Calu3 (cell line): ENCODE measurements at regions of chr6 and their contacts with region 1.

Region 1: GRCh38 chr6:100116411-100117194 is 122.6 kb upstream of the MCHR2 start:
- DNase-seq: peak; percentile 55
- H3K4me3 Mint-ChIP-seq: no peak overlapping the region
- H3K27ac Mint-ChIP-seq: no peak overlapping the region
- H3K4me1 Mint-ChIP-seq: no peaks in the 10 kb centered on the region
- H3K27me3 Mint-ChIP-seq: no peaks in the 10 kb centered on the region
- CTCF ChIP-seq: peak; percentile 62

Region 2: GRCh38 chr6:100228831-100229641 is 112.4 kb after region 1 on chr6:
- CTCF ChIA-PET with region 1: interaction called, 3 read pairs
- intact Hi-C with region 1: loop called (anchors 10 kb)
- DNase-seq: peak; percentile 77
- H3K4me3 Mint-ChIP-seq: peak overlapping the region; percentile 75
- H3K27ac Mint-ChIP-seq: peak overlapping the region; percentile 73
- H3K4me1 Mint-ChIP-seq: peaks cover 38% of the 10 kb centered on the region
- H3K27me3 Mint-ChIP-seq: no peaks in the 10 kb centered on the region
- CTCF ChIP-seq: no peak

Region 3: GRCh38 chr6:100479179-100480035 is 362.8 kb after region 1 on chr6:
- CTCF ChIA-PET with region 1: no interaction called
- intact Hi-C with region 1: loop called (anchors 1 kb)
- DNase-seq: peak; percentile 30
- H3K4me3 Mint-ChIP-seq: no peak overlapping the region
- H3K27ac Mint-ChIP-seq: no peak overlapping the region
- H3K4me1 Mint-ChIP-seq: peaks cover 40% of the 10 kb centered on the region
- H3K27me3 Mint-ChIP-seq: no peaks in the 10 kb centered on the region
- CTCF ChIP-seq: peak; percentile 42

Region 4: DNA sequence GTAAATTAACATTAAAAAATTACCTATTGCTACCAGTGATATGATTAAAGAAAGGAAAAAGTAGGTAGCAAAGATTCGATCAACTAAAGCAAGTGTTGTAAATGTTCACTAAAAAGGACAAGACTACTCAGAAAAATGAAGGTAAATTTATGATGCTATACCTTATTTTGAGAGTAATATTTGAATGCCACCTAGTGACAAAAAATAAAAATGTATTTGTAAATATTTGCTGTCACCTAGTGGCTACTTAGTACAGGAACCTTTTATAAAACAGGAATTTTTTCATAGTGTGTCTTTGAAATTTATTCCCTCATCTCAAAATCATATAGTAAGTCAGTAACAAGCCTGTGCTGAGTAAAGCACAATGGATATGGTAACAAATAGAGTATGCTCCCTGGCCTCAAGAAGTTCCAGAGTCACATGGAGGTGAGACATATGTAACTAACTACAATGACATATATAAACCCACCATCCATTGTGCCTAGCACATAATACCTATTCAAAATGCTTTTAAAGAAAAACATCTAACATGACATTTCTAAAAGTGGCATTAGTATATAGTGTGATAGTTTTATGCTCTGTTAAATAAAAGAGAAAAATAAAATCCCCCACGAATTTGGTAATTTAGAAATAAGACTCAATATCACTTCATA is 541.2 kb after region 1 on chr6:
- CTCF ChIA-PET with region 1: interaction called, 5 read pairs
- intact Hi-C with region 1: loop called (anchors 1 kb)
- DNase-seq: no peak
- H3K4me3 Mint-ChIP-seq: no peak overlapping the region
- H3K27ac Mint-ChIP-seq: no peak overlapping the region
- H3K4me1 Mint-ChIP-seq: peaks cover 11% of the 10 kb centered on the region
- H3K27me3 Mint-ChIP-seq: no peaks in the 10 kb centered on the region
- CTCF ChIP-seq: peak; percentile 46